ENCODE measurements at regions of chr7 and their contacts with region 1.

Region 1: GRCh38 chr7:88111136-88111743 is 108.6 kb downstream of the SRI start:
- DNase-seq: peak; percentile 23
- H3K4me3 ChIP-seq: no peak overlapping the region
- H3K27ac ChIP-seq: no peak overlapping the region
- H3K4me1 ChIP-seq: no peaks in the 10 kb centered on the region
- H3K27me3 ChIP-seq: no peaks in the 10 kb centered on the region
- CTCF ChIP-seq: peak; percentile 38 to 54

Region 2: GRCh38 chr7:87628780-87629569 is 482.3 kb before region 1 on chr7:
- CTCF ChIA-PET with region 1: no interaction called
- dilution Hi-C with region 1: no loop called
- in situ Hi-C with region 1: no loop called
- intact Hi-C with region 1: loop called (anchors 10 kb)
- DNase-seq: peak; percentile 49
- H3K4me3 ChIP-seq: peak overlapping the region; percentile 76 to 82 (median 81)
- H3K27ac ChIP-seq: no peak overlapping the region
- H3K4me1 ChIP-seq: peaks cover 18% of the 10 kb centered on the region
- H3K27me3 ChIP-seq: no peaks in the 10 kb centered on the region
- CTCF ChIP-seq: no peak

Region 3: DNA sequence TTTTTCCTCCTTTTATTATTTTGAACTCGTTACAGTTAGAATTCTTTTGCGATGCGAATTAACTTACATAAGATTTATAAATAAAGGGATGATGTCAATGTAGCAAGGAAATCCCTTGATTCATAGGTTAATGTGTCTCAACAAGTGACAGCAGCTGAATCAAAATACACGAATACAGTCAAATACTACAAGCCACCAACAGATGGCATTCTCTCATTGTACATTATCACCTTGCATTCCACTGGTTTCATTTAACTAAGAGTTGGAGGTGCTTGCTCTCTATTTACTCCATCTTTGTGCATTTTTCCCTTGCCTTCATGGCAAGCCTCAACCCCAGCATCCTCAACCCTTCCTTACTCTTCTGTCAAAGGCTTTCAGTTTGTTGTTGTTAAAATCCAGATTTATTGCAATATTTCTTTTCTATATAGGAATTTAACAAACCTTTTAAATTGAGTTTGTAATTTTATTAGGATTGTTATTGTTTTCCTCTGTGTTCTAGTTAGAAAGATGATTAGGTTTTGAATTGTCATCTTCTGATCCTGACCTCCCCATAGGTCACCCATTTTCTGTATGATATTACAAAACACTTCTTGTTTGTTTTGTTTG is 313.3 kb before region 1 on chr7:
- CTCF ChIA-PET with region 1: no interaction called
- dilution Hi-C with region 1: no loop called
- in situ Hi-C with region 1: loop called in 1 of 2 experiments (anchors 10 kb)
- intact Hi-C with region 1: loop called (anchors 1 kb)
- DNase-seq: peak; percentile 68
- H3K4me3 ChIP-seq: no peak overlapping the region
- H3K27ac ChIP-seq: no peak overlapping the region
- H3K4me1 ChIP-seq: no peaks in the 10 kb centered on the region
- H3K27me3 ChIP-seq: no peaks in the 10 kb centered on the region
- CTCF ChIP-seq: peak; percentile 62 to 70

Region 4: DNA sequence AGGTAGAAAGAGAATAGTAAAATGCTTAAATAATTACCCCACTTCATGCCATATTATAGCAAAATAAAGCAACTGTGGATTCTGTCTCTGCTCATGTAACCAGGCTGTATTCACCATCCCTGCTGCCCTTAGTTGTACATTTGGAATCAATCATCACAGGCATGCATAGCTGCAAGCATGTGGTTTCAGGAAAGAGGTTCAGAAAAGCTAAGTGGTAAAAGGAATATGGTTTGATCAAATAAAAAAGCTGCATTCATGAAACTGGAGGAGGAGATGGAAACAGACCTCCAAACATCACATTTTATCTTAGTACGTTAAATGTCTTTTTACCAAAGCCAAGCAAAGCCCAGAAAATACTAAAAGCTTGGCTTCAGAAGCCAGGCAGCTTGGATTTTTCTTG is 95.9 kb before region 1 on chr7:
- CTCF ChIA-PET with region 1: no interaction called
- dilution Hi-C with region 1: no loop called
- in situ Hi-C with region 1: no loop called
- intact Hi-C with region 1: no loop called
- DNase-seq: no peak
- H3K4me3 ChIP-seq: no peak overlapping the region
- H3K27ac ChIP-seq: no peak overlapping the region
- H3K4me1 ChIP-seq: no peaks in the 10 kb centered on the region
- H3K27me3 ChIP-seq: no peaks in the 10 kb centered on the region
- CTCF ChIP-seq: no peak

Measured in mammary epithelial cell (primary cell).